ENCODE measurements at regions of chr6 and their contacts with region 1.

Region 1: DNA sequence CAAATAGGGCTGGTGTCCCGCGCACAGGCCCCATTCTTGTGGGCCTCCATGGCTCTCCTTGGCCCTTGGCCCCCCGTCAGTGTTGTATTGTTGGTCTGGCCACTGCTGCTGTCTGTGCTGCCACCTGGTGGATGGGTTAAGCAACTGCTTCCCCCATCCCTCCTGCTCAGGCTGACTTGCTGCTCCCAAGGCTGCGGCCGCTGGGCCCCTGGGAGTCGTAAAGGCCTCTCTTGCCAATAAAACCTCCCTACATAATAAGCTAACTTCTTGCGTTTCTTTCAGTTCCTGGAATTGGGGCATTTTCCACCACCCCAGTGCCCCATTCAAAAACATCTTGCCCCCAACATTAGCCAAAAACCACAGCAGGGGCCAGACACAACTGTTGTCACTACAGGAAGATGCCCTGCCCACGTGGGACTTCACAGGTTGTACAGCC is 27.1 kb downstream of the CD83 start:
- DNase-seq: peak; percentile 47 to 58
- H3K4me3 ChIP-seq: no peak overlapping the region
- H3K27ac ChIP-seq: no peak overlapping the region
- H3K4me1 ChIP-seq: no peaks in the 10 kb centered on the region
- H3K27me3 ChIP-seq: no peaks in the 10 kb centered on the region
- CTCF ChIP-seq: peak; percentile 75 to 81 (median 81)
- POLR2A ChIP-seq: no peak

Region 2: GRCh38 chr6:13908955-13909381 is 235.7 kb before region 1 on chr6:
- intact Hi-C with region 1: loop called (anchors 10 kb)
- DNase-seq: peak; percentile 19 to 42
- H3K4me3 ChIP-seq: no peak overlapping the region
- H3K27ac ChIP-seq: no peak overlapping the region
- H3K4me1 ChIP-seq: no peaks in the 10 kb centered on the region
- H3K27me3 ChIP-seq: no peaks in the 10 kb centered on the region
- CTCF ChIP-seq: peak; percentile 70 to 85 (median 79)
- POLR2A ChIP-seq: no peak

Region 3: GRCh38 chr6:14059791-14060444 is 84.8 kb before region 1 on chr6:
- intact Hi-C with region 1: no loop called
- DNase-seq: no peak
- H3K4me3 ChIP-seq: no peak overlapping the region
- H3K27ac ChIP-seq: no peak overlapping the region
- H3K4me1 ChIP-seq: no peaks in the 10 kb centered on the region
- H3K27me3 ChIP-seq: no peaks in the 10 kb centered on the region
- CTCF ChIP-seq: no peak
- POLR2A ChIP-seq: no peak